Panc1 (cell line): ENCODE measurements at regions of chr3 and their contacts with region 1.

Region 1: GRCh38 chr3:40701016-40701588 is 176.3 kb downstream of the ZNF621 start:
- DNase-seq: no peak
- ATAC-seq: no peak
- H3K4me3 ChIP-seq: no peak overlapping the region
- H3K27ac ChIP-seq: no peak overlapping the region
- H3K4me1 ChIP-seq: no peaks in the 10 kb centered on the region
- H3K27me3 ChIP-seq: no peaks in the 10 kb centered on the region
- CTCF ChIP-seq: no peak

Region 2: GRCh38 chr3:40623567-40623966 is 77.5 kb before region 1 on chr3:
- CTCF ChIA-PET with region 1: no interaction called
- POLR2A ChIA-PET with region 1: no interaction called
- in situ Hi-C with region 1: no loop called
- intact Hi-C with region 1: no loop called
- DNase-seq: no peak
- ATAC-seq: no peak
- H3K4me3 ChIP-seq: no peak overlapping the region
- H3K27ac ChIP-seq: no peak overlapping the region
- H3K4me1 ChIP-seq: no peaks in the 10 kb centered on the region
- H3K27me3 ChIP-seq: no peaks in the 10 kb centered on the region
- CTCF ChIP-seq: no peak

Region 3: DNA sequence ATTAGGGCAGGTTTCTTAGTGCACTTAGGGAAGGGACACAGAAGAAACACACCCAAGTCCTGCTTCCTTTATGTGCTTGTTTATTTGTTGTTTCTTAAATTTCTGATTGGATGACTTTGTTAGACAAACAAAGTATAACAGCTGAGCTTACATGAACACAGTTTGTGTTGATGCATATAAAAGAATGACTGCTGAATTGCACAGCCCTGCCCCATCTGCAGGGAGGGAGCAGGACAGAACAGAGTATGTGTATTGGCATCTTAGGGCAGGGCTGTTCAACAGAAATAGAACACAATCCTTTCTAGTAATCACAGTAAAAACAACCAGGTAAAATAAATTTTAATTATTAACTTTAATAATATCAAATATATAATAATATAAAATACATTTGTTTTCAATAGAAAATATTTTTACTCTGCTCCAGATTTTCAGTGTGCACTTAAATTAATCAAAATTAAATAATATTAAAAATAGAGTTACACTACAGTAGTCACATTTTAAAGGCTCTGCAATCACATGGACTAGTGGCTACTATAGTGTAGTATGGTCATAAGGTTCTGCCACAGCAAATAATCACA is 22.1 kb after region 1 on chr3:
- CTCF ChIA-PET with region 1: no interaction called
- POLR2A ChIA-PET with region 1: interaction called, 11 read pairs
- in situ Hi-C with region 1: no loop called
- intact Hi-C with region 1: no loop called
- DNase-seq: no peak
- ATAC-seq: no peak
- H3K4me3 ChIP-seq: no peak overlapping the region
- H3K27ac ChIP-seq: no peak overlapping the region
- H3K4me1 ChIP-seq: no peaks in the 10 kb centered on the region
- H3K27me3 ChIP-seq: no peaks in the 10 kb centered on the region
- CTCF ChIP-seq: no peak